Naive thymus-derived CD4-positive, alpha-beta T cell (primary cell): ENCODE measurements at regions of chrX and their contacts with region 1.

Region 1: DNA sequence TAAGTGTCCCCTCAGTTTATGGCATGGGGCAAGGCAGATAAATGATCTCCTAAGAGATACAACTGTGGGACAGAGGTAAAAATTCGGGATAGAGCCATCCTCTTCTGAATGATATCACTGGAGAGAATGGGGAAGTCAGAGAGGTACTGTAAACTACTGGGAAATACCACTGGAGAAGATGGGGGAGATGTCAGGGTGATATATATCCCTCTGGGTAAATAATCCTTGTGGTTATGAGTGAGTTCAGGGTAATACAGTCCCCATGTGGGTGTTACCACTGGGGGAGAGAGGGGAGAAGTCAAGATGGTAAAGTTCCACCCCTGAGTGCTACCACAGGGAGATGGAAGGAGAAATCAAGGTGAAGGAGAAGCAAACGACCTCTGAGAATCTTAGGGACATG is 63.9 kb upstream of the ZNF81 start:
- DNase-seq: no peak
- ATAC-seq: no peak
- H3K4me3 ChIP-seq: no peak overlapping the region
- H3K4me3 Mint-ChIP-seq: no peak overlapping the region
- H3K27ac ChIP-seq: no peak overlapping the region
- H3K27ac Mint-ChIP-seq: no peak overlapping the region
- H3K4me1 ChIP-seq: no peaks in the 10 kb centered on the region
- H3K4me1 Mint-ChIP-seq: no peaks in the 10 kb centered on the region
- H3K27me3 ChIP-seq: no peaks in the 10 kb centered on the region
- H3K27me3 Mint-ChIP-seq: peaks cover 0 to 9% (median 7%) of the 10 kb centered on the region in 5 donors

Region 2: GRCh38 chrX:46713672-46714490 is 1058.9 kb before region 1 on chrX:
- CTCF ChIA-PET with region 1: no interaction called
- POLR2A ChIA-PET with region 1: no interaction called
- intact Hi-C with region 1: loop called in 1 of 2 experiments (anchors 10 kb)
- DNase-seq: no peak
- ATAC-seq: no peak
- H3K4me3 ChIP-seq: no peak overlapping the region
- H3K4me3 Mint-ChIP-seq: no peak overlapping the region
- H3K27ac ChIP-seq: no peak overlapping the region
- H3K27ac Mint-ChIP-seq: peak overlapping the region in 1 of 9 donors; percentile 42
- H3K4me1 ChIP-seq: no peaks in the 10 kb centered on the region
- H3K4me1 Mint-ChIP-seq: peaks cover 0 to 60% (median 5%) of the 10 kb centered on the region in 7 donors
- H3K27me3 ChIP-seq: no peaks in the 10 kb centered on the region
- H3K27me3 Mint-ChIP-seq: no peaks in the 10 kb centered on the region